Sigmoid colon (tissue), 7 donors: ENCODE measurements at regions of chr7 and their contacts with region 1.

Region 1: DNA sequence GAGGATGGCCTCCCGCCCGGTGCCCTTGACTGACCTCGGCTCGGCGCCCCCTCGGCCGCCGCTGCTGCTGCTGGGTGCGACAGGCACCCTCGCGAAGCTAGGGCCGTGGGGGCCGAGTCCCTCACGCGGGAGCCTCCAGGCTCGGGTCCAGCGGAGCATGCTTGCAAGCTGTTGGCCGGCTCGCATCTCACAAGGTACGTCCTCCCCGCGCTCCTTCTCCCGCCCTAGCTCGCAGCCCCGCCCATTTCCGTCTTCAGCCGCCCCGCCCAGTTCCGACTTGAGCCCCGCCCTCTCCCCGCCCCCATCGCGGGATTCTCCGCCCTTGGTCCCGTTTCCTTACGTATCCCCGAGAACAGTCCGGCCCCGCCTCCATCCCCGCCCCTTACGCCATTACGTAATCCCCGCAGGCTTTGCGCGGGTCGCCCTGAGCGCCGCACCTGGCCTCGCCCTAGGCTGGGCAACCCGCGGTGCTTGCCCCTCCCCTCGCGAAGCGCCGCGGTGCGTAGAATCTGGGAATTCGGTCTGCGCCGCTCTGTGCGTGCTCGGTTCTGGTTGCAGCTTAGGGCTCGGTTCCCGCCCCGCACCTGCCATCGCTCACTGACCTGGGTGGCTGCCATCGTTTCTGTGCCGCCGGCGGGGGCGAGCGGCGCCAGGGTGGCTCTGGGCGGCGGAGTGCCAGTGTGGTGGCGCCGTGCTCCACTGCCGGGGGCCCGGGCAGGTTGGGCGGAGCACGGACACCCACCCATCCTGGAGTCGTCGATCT is at the start of gene ABHD11:
- DNase-seq: peak; percentile 100
- H3K4me3 ChIP-seq: peak within 1 kb of the TSS; percentile 66 to 88 (median 80)
- H3K27ac ChIP-seq: peak within 1 kb of the TSS; percentile 87 to 94 (median 90)
- H3K4me1 ChIP-seq: peaks cover 0 to 29% (median 17%) of the 10 kb centered on the region in 4 donors
- H3K27me3 ChIP-seq: no peaks in the 10 kb centered on the region
- CTCF ChIP-seq: no peak
- EP300 ChIP-seq: no peak
- POLR2A ChIP-seq: peak; percentile 78 to 82
- total RNA-seq, gene ABHD11: 5.4 to 13.0 (median 9.2) TPM

Region 2: DNA sequence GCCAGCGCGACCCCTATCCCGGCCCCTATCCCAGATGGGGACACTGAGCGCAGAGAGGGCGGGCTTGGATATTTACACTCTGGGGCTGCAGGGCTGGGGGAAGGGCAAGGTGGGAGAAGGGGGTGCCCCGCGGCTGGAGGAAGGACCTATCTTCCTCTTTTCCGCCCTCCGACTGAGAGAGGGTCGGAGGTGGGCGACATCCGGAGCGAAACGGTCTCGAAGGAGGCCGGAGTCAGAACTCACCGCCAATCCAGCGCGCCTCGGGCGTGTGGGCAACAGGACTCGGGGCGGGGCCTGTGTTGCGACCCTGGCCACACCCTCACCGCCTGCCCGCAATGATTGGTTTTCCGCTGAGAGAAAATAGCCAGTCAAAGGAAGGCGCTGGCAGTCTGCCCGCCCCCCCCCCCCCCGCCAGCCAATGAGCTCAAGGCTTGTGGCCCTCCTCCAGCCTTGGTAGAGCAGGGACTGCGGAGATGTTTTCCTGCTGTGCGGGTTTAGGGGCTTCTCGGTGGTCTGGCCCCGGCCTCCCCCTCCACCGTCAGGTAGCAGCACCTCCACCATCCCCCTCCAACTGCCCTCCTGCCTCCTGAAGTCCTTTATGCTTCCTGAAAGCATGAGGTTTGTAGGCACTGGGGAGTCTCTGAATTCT is 103.6 kb after region 1 on chr7 and contains the start of gene METTL27:
- intact Hi-C with region 1: loop called (anchors 10 kb)
- DNase-seq: peak; percentile 97
- H3K4me3 ChIP-seq: peak within 1 kb of the TSS; percentile 45 to 67 (median 60)
- H3K27ac ChIP-seq: peak within 1 kb of the TSS; percentile 69 to 80 (median 76)
- H3K4me1 ChIP-seq: peaks cover 0 to 31% (median 19%) of the 10 kb centered on the region in 4 donors
- H3K27me3 ChIP-seq: no peaks in the 10 kb centered on the region
- CTCF ChIP-seq: no peak
- EP300 ChIP-seq: no peak
- POLR2A ChIP-seq: peak; percentile 39 to 70
- total RNA-seq, gene METTL27: 0.99 to 5.5 (median 2.1) TPM

Region 3: GRCh38 chr7:74074770-74075169 is 336.0 kb after region 1 on chr7:
- intact Hi-C with region 1: no loop called
- DNase-seq: no peak
- H3K4me3 ChIP-seq: no peak overlapping the region
- H3K27ac ChIP-seq: no peak overlapping the region
- H3K4me1 ChIP-seq: no peaks in the 10 kb centered on the region
- H3K27me3 ChIP-seq: no peaks in the 10 kb centered on the region
- CTCF ChIP-seq: no peak
- EP300 ChIP-seq: no peak
- POLR2A ChIP-seq: no peak